ENCODE measurements at regions of chr12 and their contacts with region 1.

Region 1: DNA sequence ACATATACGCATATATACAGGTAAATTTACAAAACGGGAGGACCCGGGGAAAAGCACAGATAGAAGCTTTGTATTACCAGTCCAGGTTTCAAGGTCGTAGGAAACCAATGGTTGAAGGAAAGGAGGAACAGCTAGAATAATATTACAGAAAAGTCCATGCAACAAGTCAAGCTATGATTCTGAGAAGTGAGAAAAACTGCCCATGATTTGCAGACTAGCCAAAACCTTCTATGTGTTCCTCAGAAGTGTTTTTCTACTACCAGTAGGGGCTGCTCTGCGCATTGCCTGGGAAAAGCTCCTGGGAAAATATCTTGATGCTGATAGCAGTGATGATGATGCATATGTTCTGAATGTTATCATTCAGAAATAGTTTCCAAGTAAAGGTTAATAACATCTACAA is 2.2 kb downstream of the PDZRN4 start:
- DNase-seq: peak; percentile 34
- H3K4me3 ChIP-seq: no peak overlapping the region
- H3K27ac ChIP-seq: no peak overlapping the region
- H3K4me1 ChIP-seq: peaks cover 4% of the 10 kb centered on the region
- H3K27me3 ChIP-seq: peaks cover 28 to 39% of the 10 kb centered on the region in 2 experiments
- CTCF ChIP-seq: peak; percentile 36 to 53
- POLR2A ChIP-seq: no peak

Region 2: DNA sequence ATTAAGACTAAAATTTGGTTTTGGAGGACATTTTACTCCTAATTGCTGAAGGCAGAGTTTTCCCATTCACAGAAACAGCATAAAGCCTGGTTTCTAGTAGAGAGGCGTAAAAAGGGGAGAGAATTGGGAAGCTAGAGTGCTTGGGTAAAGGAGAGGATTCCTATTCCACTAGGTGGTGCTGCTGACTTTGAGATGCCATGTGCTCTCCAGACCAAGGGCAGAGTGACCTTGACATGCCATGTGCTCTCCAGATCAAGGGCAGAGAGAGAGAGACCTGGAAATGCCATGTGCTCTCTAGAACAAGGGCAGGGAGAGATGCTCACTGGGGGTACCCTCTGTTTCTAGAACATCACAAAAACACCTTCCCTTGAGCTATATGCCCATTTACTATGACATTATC is 178.4 kb before region 1 on chr12:
- CTCF ChIA-PET with region 1: interaction called, 3 read pairs
- POLR2A ChIA-PET with region 1: no interaction called
- dilution Hi-C with region 1: no loop called
- intact Hi-C with region 1: loop called (anchors 2 kb)
- DNase-seq: peak; percentile 19
- H3K4me3 ChIP-seq: no peak overlapping the region
- H3K27ac ChIP-seq: no peak overlapping the region
- H3K4me1 ChIP-seq: peaks cover 22% of the 10 kb centered on the region
- H3K27me3 ChIP-seq: no peaks in the 10 kb centered on the region
- CTCF ChIP-seq: peak in 1 of 2 donors; percentile 26
- POLR2A ChIP-seq: no peak

Region 3: DNA sequence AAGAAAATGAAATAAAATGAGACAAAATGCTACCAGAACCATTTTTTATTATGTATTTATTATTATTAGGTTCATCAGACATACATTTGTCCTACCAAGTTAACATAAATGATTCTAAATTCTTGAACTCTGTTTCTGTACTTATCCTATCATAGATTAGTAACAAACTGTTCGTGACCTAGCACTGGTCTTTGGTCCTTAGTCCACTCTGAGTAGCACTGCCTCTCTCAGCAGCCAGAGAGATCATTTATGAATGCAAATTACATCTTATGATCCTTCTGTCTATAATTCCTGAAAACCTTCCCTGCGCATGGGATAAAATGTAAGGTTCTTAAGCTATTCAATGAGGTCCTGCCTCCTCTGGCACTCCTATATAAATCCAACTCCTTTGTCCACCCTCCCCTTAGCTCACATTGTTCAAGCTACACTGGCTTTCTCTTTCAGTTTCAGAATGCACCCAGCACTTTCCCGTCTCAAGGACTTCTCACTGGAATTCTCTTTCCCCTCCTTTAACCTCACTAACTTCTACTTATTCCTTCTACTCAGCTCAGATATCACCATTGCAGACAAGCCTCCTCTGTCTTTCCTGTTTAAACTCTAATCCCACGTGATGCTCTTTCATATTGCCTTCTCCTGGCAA is 14.9 kb after region 1 on chr12:
- CTCF ChIA-PET with region 1: interaction called, 14 read pairs
- POLR2A ChIA-PET with region 1: no interaction called
- dilution Hi-C with region 1: no loop called
- intact Hi-C with region 1: no loop called
- DNase-seq: peak; percentile 5
- H3K4me3 ChIP-seq: no peak overlapping the region
- H3K27ac ChIP-seq: no peak overlapping the region
- H3K4me1 ChIP-seq: no peaks in the 10 kb centered on the region
- H3K27me3 ChIP-seq: no peaks in the 10 kb centered on the region
- CTCF ChIP-seq: no peak
- POLR2A ChIP-seq: no peak